CD8-positive, alpha-beta T cell (primary cell): ENCODE measurements at regions of chr21 and their contacts with region 1.

Region 1: DNA sequence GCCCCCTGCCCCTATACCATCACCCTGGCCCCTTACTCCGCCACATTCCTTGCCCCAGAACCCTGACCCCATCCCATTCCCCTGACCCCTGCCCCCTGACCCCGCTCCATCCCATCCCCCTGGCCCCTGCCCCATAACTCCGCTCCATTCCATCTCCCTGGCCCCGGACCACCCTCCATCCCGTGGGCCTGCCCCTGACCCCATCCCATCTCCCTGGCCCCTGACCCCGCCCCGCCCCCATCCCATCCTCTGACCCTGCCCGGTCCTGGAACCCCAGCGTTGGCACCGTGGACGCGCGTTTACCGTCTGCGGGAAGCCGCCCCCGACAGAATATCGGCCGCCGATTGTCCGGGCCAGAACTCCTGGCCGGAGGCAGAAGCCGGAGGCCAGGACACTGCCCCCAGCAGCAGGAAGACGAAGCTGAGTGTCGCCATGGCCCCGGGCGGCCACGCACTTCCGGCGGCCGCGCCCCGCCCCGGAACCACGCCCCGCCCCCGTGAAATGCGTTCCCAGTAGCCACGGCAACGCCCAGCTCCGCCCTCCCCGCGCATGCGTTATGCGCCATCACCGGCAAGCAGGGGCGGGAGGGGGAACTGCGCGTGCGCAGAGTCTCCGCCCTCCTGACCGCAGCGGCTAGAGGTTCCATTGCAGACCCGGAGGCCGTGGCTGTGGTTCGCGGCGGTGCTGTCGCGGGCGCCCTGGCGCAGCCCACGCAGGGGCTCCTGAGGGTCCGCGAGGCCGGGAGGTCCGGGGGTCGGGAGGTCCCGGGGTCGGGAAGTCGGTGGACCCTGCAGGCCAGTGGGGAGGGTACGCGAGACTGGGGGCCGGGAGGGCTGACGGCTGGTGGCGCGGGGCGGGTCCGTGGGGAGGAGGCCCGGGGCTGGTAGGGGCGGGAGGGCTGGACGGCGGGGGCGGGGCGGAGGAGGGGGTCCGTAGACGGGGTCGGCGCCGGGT is at the start of gene POFUT2:
- DNase-seq: peak; percentile 94 to 100 (median 99)
- ATAC-seq: peak; percentile 85
- H3K4me3 ChIP-seq: peak within 1 kb of the TSS; percentile 70 to 83
- H3K4me3 Mint-ChIP-seq: peak within 1 kb of the TSS; percentile 85
- H3K27ac ChIP-seq: peak within 1 kb of the TSS; percentile 80 to 83
- H3K27ac Mint-ChIP-seq: peak within 1 kb of the TSS; percentile 81
- H3K4me1 ChIP-seq: peaks cover 18% of the 10 kb centered on the region
- H3K4me1 Mint-ChIP-seq: peaks cover 26% of the 10 kb centered on the region
- H3K27me3 ChIP-seq: no peaks in the 10 kb centered on the region
- H3K27me3 Mint-ChIP-seq: no peaks in the 10 kb centered on the region
- CTCF ChIP-seq: no peak
- total RNA-seq, gene POFUT2: 54.7 to 56.7 TPM

Region 2: GRCh38 chr21:44927587-44928461 is 359.9 kb before region 1 on chr21:
- CTCF ChIA-PET with region 1: no interaction called
- POLR2A ChIA-PET with region 1: no interaction called
- intact Hi-C with region 1: loop called in 1 of 2 experiments (anchors 10 kb)
- DNase-seq: peak; percentile 59 to 96 (median 90)
- ATAC-seq: peak; percentile 78
- H3K4me3 ChIP-seq: peak overlapping the region; percentile 68 to 92
- H3K4me3 Mint-ChIP-seq: peak overlapping the region; percentile 91
- H3K27ac ChIP-seq: peak overlapping the region; percentile 75 to 79
- H3K27ac Mint-ChIP-seq: peak overlapping the region; percentile 96
- H3K4me1 ChIP-seq: peaks cover 82% of the 10 kb centered on the region
- H3K4me1 Mint-ChIP-seq: peaks cover 76% of the 10 kb centered on the region
- H3K27me3 ChIP-seq: no peaks in the 10 kb centered on the region
- H3K27me3 Mint-ChIP-seq: no peaks in the 10 kb centered on the region
- CTCF ChIP-seq: no peak

Region 3: GRCh38 chr21:45310459-45310858 is 22.7 kb after region 1 on chr21:
- CTCF ChIA-PET with region 1: interaction called, 3 read pairs
- POLR2A ChIA-PET with region 1: no interaction called
- intact Hi-C with region 1: loop called in 1 of 2 experiments (anchors 2 kb)
- DNase-seq: no peak
- ATAC-seq: no peak
- H3K4me3 ChIP-seq: no peak overlapping the region
- H3K4me3 Mint-ChIP-seq: no peak overlapping the region
- H3K27ac ChIP-seq: no peak overlapping the region
- H3K27ac Mint-ChIP-seq: no peak overlapping the region
- H3K4me1 ChIP-seq: peaks cover 7% of the 10 kb centered on the region
- H3K4me1 Mint-ChIP-seq: no peaks in the 10 kb centered on the region
- H3K27me3 ChIP-seq: peaks cover 0 to 3% of the 10 kb centered on the region in 2 experiments
- H3K27me3 Mint-ChIP-seq: peaks cover 17% of the 10 kb centered on the region
- CTCF ChIP-seq: no peak

Region 4: GRCh38 chr21:45542242-45542666 is 254.5 kb after region 1 on chr21 and contains the start of gene SLC19A1:
- CTCF ChIA-PET with region 1: interaction called, 3 read pairs
- POLR2A ChIA-PET with region 1: no interaction called
- intact Hi-C with region 1: loop called in 1 of 2 experiments (anchors 2 kb)
- DNase-seq: peak; percentile 42 to 87 (median 67)
- ATAC-seq: peak; percentile 86
- H3K4me3 ChIP-seq: peak within 1 kb of the TSS; percentile 45 to 57
- H3K4me3 Mint-ChIP-seq: peak within 1 kb of the TSS; percentile 72
- H3K27ac ChIP-seq: peak within 1 kb of the TSS; percentile 30 to 54
- H3K27ac Mint-ChIP-seq: no peak within 1 kb of the TSS
- H3K4me1 ChIP-seq: peaks cover 17% of the 10 kb centered on the region
- H3K4me1 Mint-ChIP-seq: peaks cover 14% of the 10 kb centered on the region
- H3K27me3 ChIP-seq: no peaks in the 10 kb centered on the region
- H3K27me3 Mint-ChIP-seq: no peaks in the 10 kb centered on the region
- CTCF ChIP-seq: peak; percentile 40
- total RNA-seq, gene SLC19A1: 8.8 to 9.0 TPM

Region 5: GRCh38 chr21:45923146-45923545 is 635.4 kb after region 1 on chr21:
- CTCF ChIA-PET with region 1: no interaction called
- POLR2A ChIA-PET with region 1: no interaction called
- intact Hi-C with region 1: loop called in 1 of 2 experiments (anchors 1 kb)
- DNase-seq: peak; percentile 49 to 83 (median 75)
- ATAC-seq: peak; percentile 100
- H3K4me3 ChIP-seq: no peak overlapping the region
- H3K4me3 Mint-ChIP-seq: no peak overlapping the region
- H3K27ac ChIP-seq: no peak overlapping the region
- H3K27ac Mint-ChIP-seq: no peak overlapping the region
- H3K4me1 ChIP-seq: peaks cover 18% of the 10 kb centered on the region
- H3K4me1 Mint-ChIP-seq: peaks cover 19% of the 10 kb centered on the region
- H3K27me3 ChIP-seq: no peaks in the 10 kb centered on the region
- H3K27me3 Mint-ChIP-seq: no peaks in the 10 kb centered on the region
- CTCF ChIP-seq: peak; percentile 84

Region 6: GRCh38 chr21:46597896-46598343 is 1310.2 kb after region 1 on chr21:
- CTCF ChIA-PET with region 1: no interaction called
- POLR2A ChIA-PET with region 1: no interaction called
- intact Hi-C with region 1: no loop called
- DNase-seq: no peak
- ATAC-seq: no peak
- H3K4me3 ChIP-seq: no peak overlapping the region
- H3K4me3 Mint-ChIP-seq: no peak overlapping the region
- H3K27ac ChIP-seq: no peak overlapping the region
- H3K27ac Mint-ChIP-seq: no peak overlapping the region
- H3K4me1 ChIP-seq: peaks cover 16% of the 10 kb centered on the region
- H3K4me1 Mint-ChIP-seq: peaks cover 33% of the 10 kb centered on the region
- H3K27me3 ChIP-seq: no peaks in the 10 kb centered on the region
- H3K27me3 Mint-ChIP-seq: no peaks in the 10 kb centered on the region
- CTCF ChIP-seq: no peak